ENCODE measurements at regions of chr10 and their contacts with region 1.

Region 1: DNA sequence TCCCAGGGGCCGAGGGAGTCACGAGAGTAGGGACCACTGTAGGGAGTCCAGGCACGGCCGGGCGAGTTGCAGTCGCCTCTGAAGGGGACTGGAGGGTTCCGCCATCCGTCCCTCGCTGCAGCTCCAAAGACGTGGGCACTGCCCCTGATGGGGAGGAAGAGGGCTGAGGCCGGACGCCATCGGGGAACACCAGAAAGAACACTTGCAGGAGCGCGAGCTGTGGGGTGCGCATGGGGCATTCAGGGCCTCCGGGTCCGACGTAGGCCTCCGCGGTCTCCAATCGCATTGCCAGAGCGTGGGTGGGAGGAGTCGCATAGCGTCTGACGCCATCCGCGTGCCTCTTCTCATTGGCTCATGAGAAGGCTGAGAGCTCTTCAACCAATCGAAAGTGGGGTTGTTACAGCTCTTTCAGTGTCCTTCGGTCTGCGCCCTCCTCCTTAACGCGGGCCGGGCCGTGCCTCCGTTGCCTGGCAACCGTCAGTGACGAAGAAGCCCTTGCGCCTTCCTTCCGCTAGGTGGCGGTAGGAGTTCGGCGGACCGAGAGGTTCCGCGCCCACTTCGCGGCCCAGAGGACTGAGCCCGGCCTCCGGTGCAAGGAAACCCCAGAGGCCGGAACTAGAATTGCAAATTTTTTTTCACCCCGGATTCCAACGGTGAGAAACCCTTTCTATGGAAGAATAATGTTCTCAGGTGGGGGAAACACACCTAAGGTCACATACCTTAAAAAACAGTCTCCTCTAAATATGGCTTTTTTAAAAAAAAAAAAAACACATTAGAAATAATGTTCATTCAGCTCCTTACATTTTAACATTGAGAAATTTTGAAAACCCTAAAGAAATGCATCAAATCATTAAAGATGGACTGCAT is at the start of gene TCTN3:
- DNase-seq: peak; percentile 96 to 98 (median 98)
- ATAC-seq: peak; percentile 100
- H3K4me3 ChIP-seq: peak within 1 kb of the TSS; percentile 77
- H3K27ac ChIP-seq: peak within 1 kb of the TSS; percentile 55
- H3K4me1 ChIP-seq: no peaks in the 10 kb centered on the region
- H3K27me3 ChIP-seq: no peaks in the 10 kb centered on the region
- total RNA-seq, gene TCTN3: 15.3 to 18.5 (median 16.2) TPM

Region 2: GRCh38 chr10:95656291-95657164 is 37.4 kb before region 1 on chr10 and contains the start of gene ALDH18A1:
- intact Hi-C with region 1: no loop called
- DNase-seq: peak; percentile 96 to 98 (median 97)
- ATAC-seq: peak; percentile 97 to 98
- H3K4me3 ChIP-seq: peak within 1 kb of the TSS; percentile 52
- H3K27ac ChIP-seq: no peak within 1 kb of the TSS
- H3K4me1 ChIP-seq: no peaks in the 10 kb centered on the region
- H3K27me3 ChIP-seq: no peaks in the 10 kb centered on the region
- total RNA-seq, gene ALDH18A1: 16.3 to 29.8 (median 19.9) TPM

Region 3: GRCh38 chr10:95756041-95756761 is 62.3 kb after region 1 on chr10 and contains the start of gene ENTPD1:
- intact Hi-C with region 1: no loop called
- DNase-seq: peak in 2 of 3 donors; percentile 54 to 61
- ATAC-seq: peak; percentile 37 to 66
- H3K4me3 ChIP-seq: peak within 1 kb of the TSS; percentile 68
- H3K27ac ChIP-seq: peak within 1 kb of the TSS; percentile 66
- H3K4me1 ChIP-seq: no peaks in the 10 kb centered on the region
- H3K27me3 ChIP-seq: no peaks in the 10 kb centered on the region
- total RNA-seq, gene ENTPD1: 14.8 to 30.4 (median 19.1) TPM

Region 4: GRCh38 chr10:95841661-95842498 is 148.0 kb after region 1 on chr10:
- intact Hi-C with region 1: loop called in 1 of 4 experiments (anchors 10 kb)
- DNase-seq: no peak
- ATAC-seq: peak; percentile 72 to 89
- H3K4me3 ChIP-seq: no peak overlapping the region
- H3K27ac ChIP-seq: peak overlapping the region; percentile 23
- H3K4me1 ChIP-seq: no peaks in the 10 kb centered on the region
- H3K27me3 ChIP-seq: no peaks in the 10 kb centered on the region

Region 5: DNA sequence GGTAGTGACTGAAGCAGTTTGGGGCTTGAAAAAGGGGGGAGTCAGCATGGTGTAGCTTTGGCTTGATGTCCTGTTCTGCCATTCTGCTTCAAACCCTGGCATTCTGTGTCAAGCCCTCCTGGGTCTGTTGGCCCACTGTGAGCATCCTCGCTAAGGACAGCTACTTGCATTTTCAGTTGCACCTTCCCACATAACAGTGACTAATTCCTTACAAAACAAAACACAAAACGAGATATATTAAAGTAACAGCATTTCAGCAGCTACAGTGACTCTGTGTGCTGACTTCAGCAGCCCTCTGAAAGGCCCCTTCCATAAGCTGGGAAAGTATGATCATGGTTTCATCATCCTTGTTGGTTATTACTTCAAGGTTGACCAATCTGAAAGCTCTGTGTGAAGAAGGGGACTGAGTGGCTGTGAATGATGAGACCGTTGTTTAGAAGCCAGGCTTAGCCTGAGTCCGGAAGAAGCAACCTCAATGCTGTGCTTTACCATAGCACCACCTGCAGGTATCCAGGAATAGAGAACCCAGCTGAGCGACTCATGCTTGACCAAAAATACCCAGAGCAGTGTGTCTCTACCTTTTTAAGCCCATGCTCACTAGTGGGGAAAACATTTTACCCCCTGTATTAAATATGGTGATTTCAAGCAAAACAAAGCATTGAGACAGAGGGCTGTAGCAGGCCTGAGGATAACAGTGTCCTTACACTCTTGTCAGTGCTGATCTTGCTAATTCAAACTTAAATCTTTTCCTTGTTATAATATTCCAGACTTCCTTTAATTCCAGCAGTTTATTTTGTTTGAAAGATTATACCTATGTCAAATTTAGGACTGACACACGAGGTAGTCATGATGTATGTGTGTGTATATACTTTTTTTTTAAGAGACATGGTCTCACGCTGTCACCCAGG is 171.3 kb after region 1 on chr10:
- intact Hi-C with region 1: loop called in 2 of 4 experiments (anchors 10 kb)
- DNase-seq: no peak
- ATAC-seq: peak; percentile 86 to 87
- H3K4me3 ChIP-seq: no peak overlapping the region
- H3K27ac ChIP-seq: no peak overlapping the region
- H3K4me1 ChIP-seq: no peaks in the 10 kb centered on the region
- H3K27me3 ChIP-seq: no peaks in the 10 kb centered on the region

Region 6: GRCh38 chr10:95987685-95988426 is 294.0 kb after region 1 on chr10:
- intact Hi-C with region 1: no loop called
- DNase-seq: no peak
- ATAC-seq: no peak
- H3K4me3 ChIP-seq: no peak overlapping the region
- H3K27ac ChIP-seq: no peak overlapping the region
- H3K4me1 ChIP-seq: no peaks in the 10 kb centered on the region
- H3K27me3 ChIP-seq: no peaks in the 10 kb centered on the region

Measured in right cardiac atrium (tissue), 5 donors.